Common myeloid progenitor, CD34-positive (primary cell): ENCODE measurements at regions of chr10 and their contacts with region 1.

Region 1: GRCh38 chr10:116796910-116797513 is 52.3 kb upstream of the ENO4 start:
- DNase-seq: peak; percentile 74 to 85 (median 82)
- H3K4me3 ChIP-seq: no peak overlapping the region
- H3K27ac ChIP-seq: no peak overlapping the region
- H3K4me1 ChIP-seq: no peaks in the 10 kb centered on the region
- H3K27me3 ChIP-seq: peaks cover 3 to 14% (median 8%) of the 10 kb centered on the region in 5 experiments

Region 2: GRCh38 chr10:116688241-116688711 is 108.7 kb before region 1 on chr10:
- CTCF ChIA-PET with region 1: interaction called, 20 read pairs
- POLR2A ChIA-PET with region 1: no interaction called
- DNase-seq: peak in 2 of 3 donors; percentile 15 to 45
- H3K4me3 ChIP-seq: peak overlapping the region in 1 of 7 experiments; percentile 38
- H3K27ac ChIP-seq: no peak overlapping the region
- H3K4me1 ChIP-seq: peaks cover 0 to 2% (median 0%) of the 10 kb centered on the region in 4 experiments
- H3K27me3 ChIP-seq: peaks cover 0 to 8% (median 4%) of the 10 kb centered on the region in 5 experiments

Region 3: GRCh38 chr10:116808706-116809235 is 11.8 kb after region 1 on chr10:
- CTCF ChIA-PET with region 1: interaction called, 16 read pairs
- POLR2A ChIA-PET with region 1: no interaction called
- DNase-seq: no peak
- H3K4me3 ChIP-seq: no peak overlapping the region
- H3K27ac ChIP-seq: no peak overlapping the region
- H3K4me1 ChIP-seq: no peaks in the 10 kb centered on the region
- H3K27me3 ChIP-seq: peaks cover 0 to 53% (median 15%) of the 10 kb centered on the region in 5 experiments

Region 4: DNA sequence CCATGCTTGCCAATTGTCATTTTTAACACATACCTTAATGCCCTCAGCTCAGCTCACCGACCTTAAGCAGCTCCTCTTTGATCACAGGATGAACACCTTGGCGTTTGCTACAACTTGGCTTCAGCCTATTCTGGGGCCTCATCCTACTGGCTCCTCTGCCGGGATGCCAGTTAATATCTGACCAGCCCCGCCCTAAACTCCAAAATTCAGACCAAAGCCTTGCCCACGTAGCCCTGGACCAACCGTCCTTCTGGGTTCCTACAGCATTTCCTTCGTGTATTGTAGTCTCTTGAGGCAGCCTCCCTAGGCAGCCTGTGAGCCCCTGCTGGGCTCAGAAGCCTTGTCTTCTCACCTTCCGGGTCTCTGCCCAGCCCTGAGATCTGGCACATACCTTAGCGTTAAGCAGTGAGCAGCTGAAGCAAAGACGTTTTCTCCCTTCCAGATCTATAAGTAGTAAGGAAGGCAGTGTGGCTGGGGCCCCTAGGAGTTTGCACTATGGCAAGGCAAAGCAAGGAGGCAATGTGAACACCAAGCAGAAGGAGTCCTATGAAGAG is 53.1 kb after region 1 on chr10:
- CTCF ChIA-PET with region 1: no interaction called
- POLR2A ChIA-PET with region 1: no interaction called
- DNase-seq: no peak
- H3K4me3 ChIP-seq: peak overlapping the region in 5 of 7 experiments; percentile 67 to 85 (median 75)
- H3K27ac ChIP-seq: no peak overlapping the region
- H3K4me1 ChIP-seq: peaks cover 4 to 26% (median 15%) of the 10 kb centered on the region in 4 experiments
- H3K27me3 ChIP-seq: peaks cover 0 to 10% (median 2%) of the 10 kb centered on the region in 5 experiments